Cardiac septum (tissue), 1 donor: ENCODE measurements at regions of chr14 and their contacts with region 1.

Region 1: GRCh38 chr14:68248481-68249255 is 429.1 kb downstream of the RAD51B start:
- DNase-seq: no peak

Region 2: DNA sequence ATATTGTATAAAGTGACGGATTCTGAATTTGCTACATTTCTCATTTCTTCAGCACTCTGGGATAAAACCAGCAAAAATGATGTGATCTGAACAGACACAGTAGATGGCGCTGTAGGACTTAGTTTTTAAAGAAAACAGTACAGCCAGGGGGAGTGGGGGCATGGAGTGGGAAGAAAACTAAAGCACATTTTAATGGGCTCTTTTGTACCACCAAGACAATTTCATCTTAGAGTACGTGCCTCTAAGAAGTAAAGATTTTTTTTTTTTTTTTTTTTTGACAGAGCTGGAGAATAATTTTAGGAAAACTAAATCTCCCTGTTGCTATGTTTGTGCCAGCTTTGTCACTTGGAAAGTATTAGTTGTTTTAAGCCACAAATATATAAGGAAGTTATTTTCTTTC is 304.7 kb before region 1 on chr14:
- intact Hi-C with region 1: loop called (anchors 2 kb)
- DNase-seq: no peak

Region 3: DNA sequence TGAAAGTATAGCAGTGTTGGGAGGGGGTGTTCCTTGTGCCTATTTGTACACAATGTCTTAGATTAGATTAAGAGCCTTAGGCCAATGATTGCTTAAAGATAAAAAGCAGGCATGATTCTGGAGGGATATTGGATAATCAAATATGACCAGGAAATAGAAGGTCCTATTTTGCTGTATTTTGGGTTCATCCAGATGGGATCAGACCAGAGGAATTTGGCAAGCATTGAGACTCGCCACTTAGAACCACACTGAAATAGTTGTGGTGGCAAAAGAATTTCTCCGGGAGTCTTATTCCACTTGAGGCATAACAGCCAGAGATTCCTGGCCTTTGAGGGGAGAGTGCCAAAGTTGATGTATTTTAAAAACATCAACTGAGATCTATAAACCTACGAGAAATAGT is 101.9 kb before region 1 on chr14:
- intact Hi-C with region 1: loop called (anchors 2 kb)
- DNase-seq: no peak

Region 4: DNA sequence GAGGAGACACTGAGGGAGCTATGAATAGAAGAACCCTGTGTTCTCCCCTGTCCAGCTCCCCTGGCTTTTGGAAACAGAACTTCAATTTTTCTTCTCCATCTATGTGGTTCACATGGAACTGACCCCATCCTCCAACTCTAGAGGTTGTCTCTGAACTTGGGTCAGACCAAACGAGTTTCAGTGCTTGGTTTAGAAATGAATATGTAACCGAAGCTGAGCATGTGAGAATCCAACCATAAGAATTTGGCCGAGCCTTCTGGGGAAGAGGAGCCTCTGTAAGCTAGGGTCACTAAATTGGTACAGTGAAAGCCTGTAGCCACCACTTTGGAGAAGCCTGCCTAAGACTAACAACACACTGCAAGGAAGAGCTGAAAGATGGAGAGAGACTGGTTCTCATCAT is 79.8 kb after region 1 on chr14:
- intact Hi-C with region 1: no loop called
- DNase-seq: no peak

Region 5: DNA sequence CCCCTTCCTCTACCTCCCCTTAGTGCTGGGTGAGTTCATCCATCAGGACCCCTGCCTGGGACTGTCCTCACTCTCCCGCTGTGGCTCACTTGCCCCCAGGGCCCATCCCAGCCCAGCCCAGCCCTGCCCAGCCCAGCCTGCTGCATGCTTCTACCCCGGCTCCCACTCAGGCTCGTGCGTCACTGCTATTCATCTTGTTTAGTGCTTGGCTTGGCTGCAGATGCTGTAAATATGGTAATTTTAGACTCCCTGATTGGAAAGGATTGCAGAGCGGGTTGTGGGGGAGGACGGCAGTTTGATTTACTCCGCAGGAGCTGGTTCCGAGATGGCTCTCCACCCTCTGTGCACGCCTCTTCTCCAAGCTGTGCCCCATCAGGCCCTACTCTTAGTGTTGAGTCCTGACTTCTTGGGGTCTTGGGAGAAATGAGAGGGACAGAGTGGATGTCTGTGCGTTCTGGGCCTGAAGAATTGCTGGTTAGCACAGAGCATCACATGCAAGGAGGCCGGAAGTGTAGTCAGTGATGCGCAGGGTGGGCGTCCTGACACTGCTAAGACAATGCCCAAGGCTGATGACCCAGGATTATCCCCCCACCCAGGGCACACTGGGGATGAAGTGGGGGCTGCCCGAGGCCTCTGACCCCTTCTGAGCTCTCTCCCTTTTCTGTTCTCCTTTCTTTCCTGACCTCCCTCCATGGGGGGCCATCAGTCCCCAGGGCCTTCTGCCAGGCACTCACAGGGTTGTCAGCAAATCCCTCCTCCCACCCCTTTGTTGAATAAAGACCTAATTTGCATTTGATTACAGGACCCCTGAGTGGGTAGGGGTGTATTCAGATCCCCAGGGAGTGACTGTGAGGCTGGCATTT is 299.8 kb after region 1 on chr14:
- intact Hi-C with region 1: loop called (anchors 2 kb)
- DNase-seq: peak; percentile 92

Region 6: GRCh38 chr14:68676511-68676943 is 427.9 kb after region 1 on chr14:
- intact Hi-C with region 1: loop called (anchors 10 kb)
- DNase-seq: peak; percentile 35

Region 7: GRCh38 chr14:68788996-68789820 is 540.5 kb after region 1 on chr14:
- intact Hi-C with region 1: loop called (anchors 2 kb)
- DNase-seq: peak; percentile 90

Region 8: DNA sequence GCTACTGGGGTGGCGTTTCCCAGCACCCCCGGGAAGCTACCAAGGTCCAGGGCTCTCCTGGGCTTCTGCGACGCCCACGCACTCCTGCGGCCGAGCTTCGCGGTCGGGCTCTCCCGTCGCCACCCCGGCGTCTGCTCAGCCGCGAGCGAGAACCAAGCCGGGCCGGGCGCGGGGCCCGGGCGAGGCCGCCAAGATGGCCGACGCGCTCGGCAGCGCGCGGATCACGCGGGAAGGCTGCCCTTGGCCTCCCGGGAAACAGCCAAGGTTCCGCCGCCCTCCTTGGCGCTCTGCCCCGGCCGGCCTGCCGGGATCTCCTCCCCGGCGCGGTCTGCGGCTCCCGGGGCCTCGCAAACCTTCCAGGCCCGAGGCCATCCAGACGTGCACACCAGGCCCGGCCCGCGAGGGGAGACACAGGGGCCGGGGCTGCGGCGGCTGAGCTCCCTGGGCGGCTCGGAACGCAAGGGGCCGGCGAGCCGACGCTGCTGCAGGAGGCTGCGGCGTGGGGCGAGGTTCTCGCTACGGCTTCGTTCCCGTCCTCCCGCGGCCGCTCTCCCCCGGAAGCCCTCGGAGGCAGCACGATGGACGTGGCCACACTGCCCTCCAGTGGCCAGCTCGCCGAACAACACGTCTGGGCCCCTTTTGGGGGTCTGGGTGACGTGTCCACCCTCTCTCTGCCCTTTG is 567.7 kb after region 1 on chr14:
- intact Hi-C with region 1: loop called (anchors 1 kb)
- DNase-seq: peak; percentile 96